Kidney (tissue), 22 donors: ENCODE measurements at regions of chr11 and their contacts with region 1.

Region 1: GRCh38 chr11:102367364-102367763 is 20.4 kb downstream of the BIRC2 start:
- DNase-seq: peak in 1 of 5 donors; percentile 21
- H3K4me3 ChIP-seq: no peak overlapping the region
- H3K27ac ChIP-seq: no peak overlapping the region
- H3K4me1 ChIP-seq: no peaks in the 10 kb centered on the region
- H3K27me3 ChIP-seq: no peaks in the 10 kb centered on the region
- CTCF ChIP-seq: no peak

Region 2: GRCh38 chr11:102317099-102317767 is 50.1 kb before region 1 on chr11 and contains the start of gene BIRC3:
- intact Hi-C with region 1: no loop called
- DNase-seq: peak; percentile 76 to 95 (median 81)
- H3K4me3 ChIP-seq: peak within 1 kb of the TSS; percentile 28 to 87 (median 85)
- H3K27ac ChIP-seq: peak within 1 kb of the TSS; percentile 65 to 71
- H3K4me1 ChIP-seq: peaks cover 0 to 2% (median 0%) of the 10 kb centered on the region in 3 donors
- H3K27me3 ChIP-seq: no peaks in the 10 kb centered on the region
- CTCF ChIP-seq: peak; percentile 3
- total RNA-seq, gene BIRC3: 110 TPM

Region 3: GRCh38 chr11:102495161-102496042 is 128.0 kb after region 1 on chr11:
- intact Hi-C with region 1: loop called (anchors 10 kb)
- DNase-seq: peak in 3 of 5 donors; percentile 27 to 93 (median 84)
- H3K4me3 ChIP-seq: no peak overlapping the region
- H3K27ac ChIP-seq: no peak overlapping the region
- H3K4me1 ChIP-seq: peaks cover 0 to 4% (median 0%) of the 10 kb centered on the region in 3 donors
- H3K27me3 ChIP-seq: no peaks in the 10 kb centered on the region
- CTCF ChIP-seq: peak; percentile 66

Region 4: DNA sequence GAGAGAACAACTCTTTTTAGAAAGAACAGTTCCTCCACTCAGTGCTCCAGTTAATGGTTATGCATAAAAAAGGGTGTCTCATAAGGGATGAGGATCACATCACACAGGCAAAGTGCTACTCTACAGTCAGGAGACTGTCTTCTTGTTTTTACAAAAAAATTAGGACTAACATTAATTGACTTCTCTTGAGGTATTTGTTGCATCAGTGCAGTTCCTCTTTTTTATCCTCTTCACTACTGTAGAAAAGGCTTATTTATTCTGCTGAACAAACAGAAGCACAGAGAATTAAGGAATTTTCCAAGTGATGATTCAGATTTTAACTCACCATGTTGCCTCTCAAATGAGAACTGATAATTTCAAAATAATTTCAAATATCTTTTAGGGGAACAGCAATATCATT is 355.5 kb after region 1 on chr11:
- intact Hi-C with region 1: no loop called
- DNase-seq: no peak
- H3K4me3 ChIP-seq: no peak overlapping the region
- H3K27ac ChIP-seq: no peak overlapping the region
- H3K4me1 ChIP-seq: no peaks in the 10 kb centered on the region
- H3K27me3 ChIP-seq: no peaks in the 10 kb centered on the region
- CTCF ChIP-seq: no peak

Region 5: DNA sequence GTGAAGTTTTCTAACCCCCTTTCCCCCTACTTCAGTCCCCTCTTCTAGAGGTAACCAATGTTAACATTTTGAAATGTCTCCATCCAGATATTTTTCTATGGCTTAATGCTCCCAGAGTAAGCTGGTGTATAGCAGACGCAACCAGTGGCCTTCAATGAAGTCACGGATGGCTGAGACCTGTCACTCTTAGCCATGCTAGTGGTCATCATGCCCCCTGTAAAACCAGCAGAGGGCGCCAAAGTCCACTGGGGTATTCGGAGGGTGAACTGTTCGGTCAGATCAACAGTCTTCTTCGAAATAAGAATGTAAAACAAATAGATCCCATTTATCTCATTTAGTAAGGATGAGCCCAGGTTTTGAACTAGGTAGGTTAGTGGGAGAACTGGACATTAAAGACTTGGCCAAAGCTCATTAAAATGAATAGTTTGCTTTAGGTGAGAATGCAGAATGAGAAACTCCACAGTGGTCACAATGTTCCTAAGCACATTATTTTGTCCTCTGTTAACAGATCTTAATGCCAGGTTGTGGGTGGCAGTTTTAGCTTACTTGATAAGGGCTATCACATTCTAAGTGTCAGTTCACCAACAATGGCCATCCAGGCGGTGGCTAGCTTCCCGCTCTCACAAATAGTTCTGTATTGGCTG is 366.0 kb after region 1 on chr11:
- intact Hi-C with region 1: no loop called
- DNase-seq: peak in 4 of 5 donors; percentile 9 to 32 (median 20)
- H3K4me3 ChIP-seq: no peak overlapping the region
- H3K27ac ChIP-seq: no peak overlapping the region
- H3K4me1 ChIP-seq: no peaks in the 10 kb centered on the region
- H3K27me3 ChIP-seq: no peaks in the 10 kb centered on the region
- CTCF ChIP-seq: peak; percentile 50